ENCODE measurements at regions of chr17 and their contacts with region 1.

Region 1: DNA sequence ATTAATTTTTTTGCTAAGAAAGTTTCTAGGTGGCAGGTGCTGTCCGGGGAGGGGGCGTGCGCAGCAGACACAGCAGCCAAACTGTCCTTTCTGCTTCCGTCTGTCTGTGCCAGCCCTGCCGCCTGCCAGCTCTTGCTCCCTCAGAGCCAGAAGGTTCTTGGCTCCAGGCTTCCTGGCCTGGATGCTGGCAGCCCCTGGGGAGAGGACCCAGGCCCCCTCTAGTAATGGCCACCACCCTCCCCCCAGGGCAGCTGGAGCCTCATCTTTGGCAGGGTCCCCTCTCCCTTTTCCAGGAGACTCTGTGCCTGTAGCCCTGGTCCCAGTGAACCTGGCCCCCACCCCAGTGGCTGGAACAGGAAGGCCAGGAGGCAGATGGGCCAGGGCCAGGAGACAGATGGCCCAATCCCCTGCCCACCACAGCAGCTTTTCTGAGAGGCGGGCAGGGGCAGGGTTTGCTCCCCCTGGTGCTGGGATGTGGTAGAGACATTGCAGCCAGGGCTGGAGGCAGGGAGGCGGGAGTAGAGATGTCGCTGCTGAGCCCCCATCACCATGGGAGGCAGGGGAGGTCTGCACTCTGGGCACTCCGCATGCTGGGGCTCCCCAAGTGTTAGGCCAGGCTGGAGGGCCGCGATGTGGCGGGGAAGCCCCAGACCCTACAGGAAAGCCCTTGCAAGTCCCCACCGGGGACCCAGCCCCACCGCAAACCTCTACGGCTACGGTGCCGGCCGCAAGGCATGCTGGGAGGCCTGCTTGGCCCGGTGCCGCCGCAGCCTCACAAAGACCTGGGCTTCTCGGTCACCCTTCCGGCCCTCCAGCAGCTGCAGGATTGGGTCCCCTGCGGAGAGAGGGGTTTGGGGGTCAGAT is 16.7 kb downstream of the UNC13D start:
- DNase-seq: peak; percentile 99
- H3K4me3 ChIP-seq: peak overlapping the region; percentile 18 to 37; a peak in 3 of 4 replicates
- H3K27ac ChIP-seq: peak overlapping the region; percentile 10 to 98; a peak in 3 of 4 replicates
- H3K4me1 ChIP-seq: peaks cover 5 to 33% of the 10 kb centered on the region in 2 experiments; a peak in 2 of 4 replicates
- H3K27me3 ChIP-seq: no peaks in the 10 kb centered on the region
- CTCF ChIP-seq: peak; percentile 81
- EP300 ChIP-seq: peak in 1 of 2 experiments; percentile 59; a peak in 3 of 4 replicates
- RAD21 ChIP-seq: peak; percentile 73

Region 2: DNA sequence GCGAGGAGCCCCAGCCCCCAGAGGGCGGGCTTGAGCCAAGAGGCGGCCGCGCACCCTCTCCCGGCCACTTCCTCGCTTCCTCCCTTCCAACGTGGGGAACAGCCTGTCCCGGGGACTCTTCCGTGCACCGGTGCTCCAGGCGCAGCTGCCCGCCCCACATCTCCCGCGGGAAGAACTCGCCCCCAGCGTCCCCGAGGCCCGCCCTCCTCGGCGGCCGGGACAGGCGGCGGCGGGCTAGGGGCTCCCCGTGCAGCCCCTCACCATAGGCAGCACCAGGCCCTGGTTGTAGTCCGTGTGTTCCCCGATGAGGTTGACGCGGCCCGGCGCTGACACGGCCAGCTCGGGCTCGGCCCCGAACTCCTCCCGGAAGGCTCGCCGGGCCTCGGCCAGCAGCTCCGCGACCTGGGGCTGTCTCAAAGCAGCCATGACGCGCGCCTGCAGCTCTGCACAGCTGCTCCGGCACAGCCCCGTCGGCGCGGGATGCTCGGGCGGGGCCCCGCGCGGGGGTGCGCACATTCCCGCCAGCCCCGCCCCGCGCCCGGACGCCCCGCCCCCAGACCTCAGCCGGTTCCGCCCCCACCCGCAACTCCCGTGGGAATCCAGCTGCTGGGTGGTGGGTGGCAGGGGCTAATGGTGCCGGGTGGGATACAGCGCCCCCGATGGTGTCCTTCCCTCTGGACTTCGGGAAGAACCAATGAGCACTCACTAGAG is 62.6 kb before region 1 on chr17 and contains the start of gene GALK1:
- CTCF ChIA-PET with region 1: interaction called, 111 read pairs
- POLR2A ChIA-PET with region 1: interaction called, 5 read pairs
- DNase-seq: peak; percentile 98
- H3K4me3 ChIP-seq: peak within 1 kb of the TSS; percentile 58 to 92
- H3K27ac ChIP-seq: peak within 1 kb of the TSS; percentile 33 to 44; a peak in 3 of 4 replicates
- H3K4me1 ChIP-seq: peaks cover 8 to 19% of the 10 kb centered on the region in 2 experiments; a peak in 2 of 4 replicates
- H3K27me3 ChIP-seq: no peaks in the 10 kb centered on the region
- CTCF ChIP-seq: peak; percentile 38
- EP300 ChIP-seq: no peak
- RAD21 ChIP-seq: peak; percentile 49
- polyA plus RNA-seq, gene GALK1: 36.5 and 39.2 TPM in 2 replicates

Region 3: GRCh38 chr17:75799398-75799797 is 28.1 kb before region 1 on chr17:
- CTCF ChIA-PET with region 1: interaction called, 82 read pairs
- POLR2A ChIA-PET with region 1: interaction called, 4 read pairs
- DNase-seq: no peak
- H3K4me3 ChIP-seq: no peak overlapping the region
- H3K27ac ChIP-seq: no peak overlapping the region
- H3K4me1 ChIP-seq: no peaks in the 10 kb centered on the region
- H3K27me3 ChIP-seq: no peaks in the 10 kb centered on the region
- CTCF ChIP-seq: no peak
- EP300 ChIP-seq: no peak
- RAD21 ChIP-seq: no peak

Region 4: DNA sequence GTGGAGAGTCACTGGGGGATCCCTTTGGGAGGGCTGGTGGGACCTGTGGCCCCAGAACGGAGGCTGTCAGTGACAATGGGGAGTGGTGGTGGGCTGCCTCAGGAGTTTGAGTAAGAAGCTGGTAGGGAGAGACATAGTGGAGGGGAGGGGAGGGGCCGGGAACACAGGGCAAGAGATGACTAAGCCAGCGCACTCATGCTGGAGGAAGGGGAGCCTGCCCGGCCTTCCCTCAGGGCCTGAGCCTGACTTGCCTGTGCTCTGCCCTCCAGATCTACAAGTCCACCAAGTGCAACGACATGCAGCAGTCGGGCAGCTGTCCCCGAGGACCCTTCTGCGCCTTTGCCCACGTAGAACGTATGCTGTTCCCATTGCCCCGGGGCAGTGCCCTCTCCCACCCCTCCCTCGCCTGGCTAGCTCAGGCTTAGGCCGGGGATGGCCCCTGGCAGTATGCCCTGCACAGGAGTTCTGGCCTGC is 12.5 kb before region 1 on chr17:
- CTCF ChIA-PET with region 1: interaction called, 90 read pairs
- POLR2A ChIA-PET with region 1: interaction called, 3 read pairs
- DNase-seq: peak; percentile 47
- H3K4me3 ChIP-seq: no peak overlapping the region
- H3K27ac ChIP-seq: peak overlapping the region; percentile 29 to 63; a peak in 3 of 4 replicates
- H3K4me1 ChIP-seq: peaks cover 0 to 10% of the 10 kb centered on the region in 2 experiments; a peak in 3 of 4 replicates
- H3K27me3 ChIP-seq: no peaks in the 10 kb centered on the region
- CTCF ChIP-seq: no peak
- EP300 ChIP-seq: no peak
- RAD21 ChIP-seq: no peak

Region 5: DNA sequence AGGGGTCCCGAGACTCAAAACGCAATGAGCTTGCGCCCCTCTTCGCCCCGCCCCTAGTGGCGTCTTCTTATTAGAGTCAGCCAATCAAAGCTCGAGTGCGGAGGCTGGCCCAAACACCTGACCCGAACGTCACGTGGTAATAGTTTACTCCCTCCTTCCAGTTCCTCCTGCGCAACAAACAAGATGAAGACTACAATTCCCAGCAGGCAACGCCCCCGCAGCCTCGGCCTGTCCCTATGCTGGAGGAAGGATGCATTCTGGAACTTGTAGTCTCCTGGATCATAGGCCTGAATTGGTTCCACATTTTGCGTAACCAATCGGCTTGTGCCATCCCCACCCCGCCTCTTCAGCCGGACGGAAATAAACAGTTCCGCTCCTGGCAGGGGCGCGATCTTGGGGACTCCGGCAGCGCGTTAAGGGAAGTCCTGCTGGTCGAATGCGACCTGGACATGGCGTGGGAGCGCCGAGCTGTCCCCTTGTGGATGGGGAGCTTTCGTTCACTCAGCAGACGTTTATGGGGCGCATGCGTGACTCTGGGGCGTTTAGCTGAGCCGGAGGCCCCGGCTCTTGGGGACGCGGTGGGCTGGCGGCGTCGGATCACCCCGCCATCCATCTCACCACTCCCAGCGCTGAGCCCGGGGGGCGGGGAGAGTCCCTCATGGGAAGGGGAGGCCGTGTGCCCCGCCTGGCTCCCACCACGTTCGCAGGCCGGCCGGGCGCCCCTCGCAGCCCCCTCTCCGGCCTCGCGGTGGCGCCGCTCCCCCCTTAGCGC is 28.0 kb after region 1 on chr17 and contains the start of gene WBP2:
- CTCF ChIA-PET with region 1: interaction called, 326 read pairs
- POLR2A ChIA-PET with region 1: interaction called, 10 read pairs
- DNase-seq: peak; percentile 97
- H3K4me3 ChIP-seq: peak within 1 kb of the TSS; percentile 72 to 83
- H3K27ac ChIP-seq: peak within 1 kb of the TSS; percentile 86 to 88
- H3K4me1 ChIP-seq: peaks cover 12 to 19% of the 10 kb centered on the region in 2 experiments; a peak in 3 of 4 replicates
- H3K27me3 ChIP-seq: no peaks in the 10 kb centered on the region
- CTCF ChIP-seq: peak; percentile 70
- EP300 ChIP-seq: no peak
- RAD21 ChIP-seq: no peak; the same call in none of the 2 replicates
- polyA plus RNA-seq, gene WBP2: 49.7 and 55.8 TPM in 2 replicates